ENCODE measurements at regions of chr19 and their contacts with region 1.

Region 1: GRCh38 chr19:34041925-34042521 is 130.3 kb upstream of the LSM14A start:
- DNase-seq: peak; percentile 85
- H3K4me3 Mint-ChIP-seq: no peak overlapping the region
- H3K27ac Mint-ChIP-seq: no peak overlapping the region
- H3K4me1 Mint-ChIP-seq: no peaks in the 10 kb centered on the region
- H3K27me3 Mint-ChIP-seq: peaks cover 56% of the 10 kb centered on the region
- CTCF ChIP-seq: peak; percentile 96

Region 2: GRCh38 chr19:33394006-33394849 is 647.8 kb before region 1 on chr19:
- CTCF ChIA-PET with region 1: no interaction called
- intact Hi-C with region 1: no loop called
- DNase-seq: no peak
- H3K4me3 Mint-ChIP-seq: no peak overlapping the region
- H3K27ac Mint-ChIP-seq: no peak overlapping the region
- H3K4me1 Mint-ChIP-seq: no peaks in the 10 kb centered on the region
- H3K27me3 Mint-ChIP-seq: no peaks in the 10 kb centered on the region
- CTCF ChIP-seq: no peak

Region 3: GRCh38 chr19:34096020-34096915 is 54.2 kb after region 1 on chr19:
- CTCF ChIA-PET with region 1: interaction called, 15 read pairs
- intact Hi-C with region 1: loop called (anchors 1 kb)
- DNase-seq: peak; percentile 20
- H3K4me3 Mint-ChIP-seq: no peak overlapping the region
- H3K27ac Mint-ChIP-seq: no peak overlapping the region
- H3K4me1 Mint-ChIP-seq: no peaks in the 10 kb centered on the region
- H3K27me3 Mint-ChIP-seq: peaks cover 69% of the 10 kb centered on the region
- CTCF ChIP-seq: peak; percentile 52

Region 4: DNA sequence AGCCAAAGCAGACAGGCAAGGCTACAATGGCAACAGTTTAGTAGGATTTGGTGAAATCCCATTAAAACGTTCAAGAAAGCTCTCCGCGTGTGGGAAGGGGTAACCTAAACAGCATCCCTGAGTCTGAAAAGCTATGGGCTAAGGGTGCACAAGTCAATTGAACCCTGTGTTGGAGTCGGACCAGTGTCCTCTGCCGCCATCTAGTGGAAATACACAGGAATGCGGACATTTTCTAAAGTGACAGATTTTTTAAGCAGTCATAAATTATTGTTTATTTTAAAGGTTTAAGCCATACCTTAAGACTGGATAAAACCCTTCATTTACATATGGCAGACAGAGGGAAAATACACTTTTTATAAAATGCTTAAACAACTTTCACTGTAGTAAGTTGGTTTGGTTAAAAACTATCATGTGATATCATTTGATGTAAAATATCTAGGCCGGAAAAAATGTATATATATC is 103.7 kb after region 1 on chr19:
- CTCF ChIA-PET with region 1: no interaction called
- intact Hi-C with region 1: loop called (anchors 5 kb)
- DNase-seq: peak; percentile 56
- H3K4me3 Mint-ChIP-seq: no peak overlapping the region
- H3K27ac Mint-ChIP-seq: no peak overlapping the region
- H3K4me1 Mint-ChIP-seq: no peaks in the 10 kb centered on the region
- H3K27me3 Mint-ChIP-seq: no peaks in the 10 kb centered on the region
- CTCF ChIP-seq: peak; percentile 83

Measured in Calu3 (cell line).